ENCODE measurements at regions of chr19 and their contacts with region 1.

Region 1: GRCh38 chr19:17282488-17283255 is 971 bp downstream of the ANKLE1 start:
- DNase-seq: no peak
- H3K4me3 ChIP-seq: peak overlapping the region; percentile 53
- H3K27ac ChIP-seq: no peak overlapping the region
- H3K27me3 ChIP-seq: no peaks in the 10 kb centered on the region
- CTCF ChIP-seq: peak; percentile 83

Region 2: DNA sequence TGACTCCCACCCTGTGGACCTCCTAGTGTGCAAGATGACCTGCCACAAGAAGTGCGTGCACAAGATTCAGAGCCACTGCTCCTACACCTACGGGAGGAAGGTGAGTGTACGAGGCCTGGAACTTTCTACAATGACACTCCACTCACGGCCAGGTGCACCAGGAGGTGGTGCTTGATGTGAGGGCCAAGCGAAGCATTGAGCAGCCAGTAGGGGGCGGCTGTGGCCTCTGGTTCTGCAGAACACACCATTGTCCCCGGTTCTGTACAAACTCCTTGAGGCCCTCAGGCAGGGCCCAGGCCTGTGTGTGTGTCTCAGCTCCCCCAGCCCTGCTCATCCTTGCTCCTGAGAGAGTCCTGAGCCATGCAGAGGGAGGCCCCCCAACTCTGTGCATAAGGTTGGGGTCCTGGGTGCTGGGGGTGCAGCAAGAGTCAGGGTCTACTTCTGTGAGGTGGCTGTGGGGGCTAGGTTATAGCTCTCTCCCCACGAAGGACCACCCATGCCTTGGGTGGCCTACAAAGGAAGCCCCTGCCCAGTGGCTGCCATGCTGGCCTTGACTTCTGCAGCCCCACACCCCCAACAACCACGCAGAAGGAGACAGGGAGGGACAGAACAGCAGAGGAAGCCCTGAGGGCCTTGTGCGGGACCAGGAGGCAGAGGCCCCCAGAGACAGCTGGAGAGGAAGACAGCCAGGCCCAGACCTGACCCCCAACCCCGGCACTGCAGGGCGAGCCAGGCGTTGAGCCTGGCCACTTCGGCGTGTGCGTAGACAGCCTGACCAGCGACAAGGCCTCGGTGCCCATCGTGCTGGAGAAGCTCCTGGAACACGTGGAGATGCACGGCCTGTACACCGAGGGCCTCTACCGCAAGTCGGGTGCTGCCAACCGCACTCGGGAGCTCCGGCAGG is 77.2 kb before region 1 on chr19:
- CTCF ChIA-PET with region 1: interaction called, 13 read pairs
- POLR2A ChIA-PET with region 1: no interaction called
- DNase-seq: no peak
- H3K4me3 ChIP-seq: no peak overlapping the region
- H3K27ac ChIP-seq: no peak overlapping the region
- H3K27me3 ChIP-seq: no peaks in the 10 kb centered on the region
- CTCF ChIP-seq: peak; percentile 69